GM12878 (cell line): ENCODE measurements at regions of chr7 and their contacts with region 1.

Region 1: GRCh38 chr7:129952653-129953560 is at the start of gene UBE2H:
- DNase-seq: peak; percentile 72
- ATAC-seq: peak; percentile 60
- H3K4me3 ChIP-seq: peak within 1 kb of the TSS; percentile 98
- H3K27ac ChIP-seq: peak within 1 kb of the TSS; percentile 99
- H3K4me1 ChIP-seq: peaks cover 10% of the 10 kb centered on the region; the same call in 1 of the 2 replicates
- H3K27me3 ChIP-seq: no peaks in the 10 kb centered on the region
- CTCF ChIP-seq: no peak
- EP300 ChIP-seq: no peak
- POLR2A ChIP-seq: peak; percentile 87
- RAD21 ChIP-seq: no peak
- polyA plus RNA-seq, gene UBE2H: 15.6 to 16.8 TPM

Region 2: GRCh38 chr7:129831424-129832112 is 121.3 kb before region 1 on chr7:
- CTCF ChIA-PET with region 1: interaction called, 6 read pairs
- POLR2A ChIA-PET with region 1: interaction called, 10 read pairs
- RAD21 ChIA-PET with region 1: no interaction called
- SMC1A ChIA-PET with region 1: interaction called, 3 read pairs
- in situ Hi-C with region 1: no loop called
- intact Hi-C with region 1: no loop called
- DNase-seq: no peak
- ATAC-seq: no peak
- H3K4me3 ChIP-seq: no peak overlapping the region
- H3K27ac ChIP-seq: no peak overlapping the region
- H3K4me1 ChIP-seq: no peaks in the 10 kb centered on the region
- H3K27me3 ChIP-seq: no peaks in the 10 kb centered on the region
- CTCF ChIP-seq: no peak
- EP300 ChIP-seq: no peak
- POLR2A ChIP-seq: no peak
- RAD21 ChIP-seq: no peak

Region 3: DNA sequence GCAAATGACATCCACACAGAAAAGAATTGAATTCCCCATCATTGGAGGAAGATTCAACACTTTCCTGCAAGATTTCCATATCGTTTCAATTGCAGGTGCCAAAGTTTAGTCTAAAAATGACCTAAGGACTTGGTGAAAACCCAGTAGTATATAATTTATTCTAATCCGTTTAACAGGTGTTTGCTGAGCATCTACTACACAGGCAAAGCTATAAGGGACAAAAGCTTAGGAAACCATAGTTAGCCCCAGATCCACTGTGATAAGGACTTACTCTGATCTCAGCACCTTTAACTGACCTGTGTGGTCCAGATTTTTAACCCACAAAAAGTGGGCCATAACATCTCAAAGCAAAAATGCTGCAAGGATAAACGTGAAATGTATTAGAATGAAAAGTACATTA is 19.3 kb before region 1 on chr7:
- CTCF ChIA-PET with region 1: interaction called, 12 read pairs
- POLR2A ChIA-PET with region 1: interaction called, 11 read pairs
- RAD21 ChIA-PET with region 1: interaction called, 15 read pairs
- SMC1A ChIA-PET with region 1: interaction called, 30 read pairs
- in situ Hi-C with region 1: no loop called
- intact Hi-C with region 1: no loop called
- DNase-seq: no peak
- ATAC-seq: peak; percentile 27; the same call in 1 of the 3 replicates
- H3K4me3 ChIP-seq: 0 out of 2 replicates have a peak overlapping the region, but pooled peaks have one; percentile 12
- H3K27ac ChIP-seq: no peak overlapping the region; the same call in 1 of the 2 replicates
- H3K4me1 ChIP-seq: peaks cover 10% of the 10 kb centered on the region
- H3K27me3 ChIP-seq: no peaks in the 10 kb centered on the region
- CTCF ChIP-seq: no peak
- EP300 ChIP-seq: no peak
- POLR2A ChIP-seq: no peak
- RAD21 ChIP-seq: no peak

Region 4: GRCh38 chr7:130529417-130529816 is 576.5 kb after region 1 on chr7:
- CTCF ChIA-PET with region 1: no interaction called
- POLR2A ChIA-PET with region 1: no interaction called
- RAD21 ChIA-PET with region 1: no interaction called
- SMC1A ChIA-PET with region 1: no interaction called
- in situ Hi-C with region 1: no loop called
- intact Hi-C with region 1: no loop called
- DNase-seq: no peak
- ATAC-seq: no peak
- H3K4me3 ChIP-seq: no peak overlapping the region
- H3K27ac ChIP-seq: no peak overlapping the region
- H3K4me1 ChIP-seq: no peaks in the 10 kb centered on the region
- H3K27me3 ChIP-seq: no peaks in the 10 kb centered on the region
- CTCF ChIP-seq: no peak
- EP300 ChIP-seq: no peak
- POLR2A ChIP-seq: no peak
- RAD21 ChIP-seq: no peak